ENCODE measurements at regions of chr2 and their contacts with region 1.

Region 1: GRCh38 chr2:75710577-75711253 is at the start of gene GCFC2:
- DNase-seq: peak; percentile 89 to 93
- ATAC-seq: peak; percentile 97 to 98
- H3K4me3 ChIP-seq: peak within 1 kb of the TSS; percentile 60
- H3K27ac ChIP-seq: peak within 1 kb of the TSS; percentile 86 to 95
- H3K4me1 ChIP-seq: peaks cover 18% of the 10 kb centered on the region
- CTCF ChIP-seq: peak; percentile 42
- EP300 ChIP-seq: no peak
- POLR2A ChIP-seq: peak; percentile 84
- RAD21 ChIP-seq: no peak
- polyA plus RNA-seq, gene GCFC2: 40.6 and 41.7 TPM in 2 replicates

Region 2: DNA sequence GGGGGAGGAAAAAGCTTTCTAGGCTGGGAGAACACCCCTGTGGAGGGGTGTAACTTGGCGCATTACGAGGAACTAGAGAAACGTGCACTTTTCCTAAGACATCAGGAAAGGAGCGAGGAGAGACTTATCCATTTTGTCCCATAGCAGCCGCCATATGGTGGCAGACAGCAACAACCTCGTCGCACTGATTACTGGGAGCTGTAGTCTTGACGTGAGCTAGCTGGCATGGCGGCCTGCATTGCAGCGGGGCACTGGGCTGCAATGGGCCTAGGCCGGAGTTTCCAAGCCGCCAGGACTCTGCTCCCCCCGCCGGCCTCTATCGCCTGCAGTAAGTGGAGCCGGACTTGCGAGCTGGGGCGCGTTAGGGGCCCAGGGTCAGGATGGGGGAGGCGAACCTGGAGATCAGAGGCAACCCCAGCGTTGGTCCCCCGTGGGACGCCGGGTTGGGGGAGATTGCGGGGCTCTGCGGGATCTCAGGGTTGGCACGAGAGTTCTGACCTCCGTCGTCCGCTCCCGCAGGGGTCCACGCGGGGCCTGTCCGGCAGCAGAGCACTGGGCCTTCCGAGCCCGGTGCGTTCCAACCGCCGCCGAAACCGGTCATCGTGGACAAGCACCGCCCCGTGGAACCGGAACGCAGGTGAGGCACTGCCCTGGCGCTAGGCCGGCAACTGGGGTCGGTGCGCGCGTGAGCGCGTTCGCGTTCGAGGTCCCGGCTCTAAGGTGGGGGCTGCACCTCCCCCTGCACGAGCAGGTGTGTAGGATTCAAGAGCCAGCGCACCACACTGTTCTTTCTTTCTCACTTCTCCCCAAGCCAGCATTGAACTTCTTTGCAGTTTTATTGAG is 63.9 kb before region 1 on chr2 and contains the start of gene MRPL19:
- CTCF ChIA-PET with region 1: interaction called, 28 read pairs
- POLR2A ChIA-PET with region 1: interaction called, 10 read pairs
- DNase-seq: peak; percentile 96 to 98
- ATAC-seq: peak; percentile 98 to 99
- H3K4me3 ChIP-seq: peak within 1 kb of the TSS; percentile 64
- H3K27ac ChIP-seq: peak within 1 kb of the TSS; percentile 87 to 96
- H3K4me1 ChIP-seq: peaks cover 9% of the 10 kb centered on the region; the same call in 2 of the 3 replicates
- CTCF ChIP-seq: no peak
- EP300 ChIP-seq: no peak
- POLR2A ChIP-seq: peak; percentile 79
- RAD21 ChIP-seq: no peak
- polyA plus RNA-seq, gene MRPL19: 88.6 and 147 TPM in 2 replicates